ENCODE measurements at regions of chr1 and their contacts with region 1.

Region 1: DNA sequence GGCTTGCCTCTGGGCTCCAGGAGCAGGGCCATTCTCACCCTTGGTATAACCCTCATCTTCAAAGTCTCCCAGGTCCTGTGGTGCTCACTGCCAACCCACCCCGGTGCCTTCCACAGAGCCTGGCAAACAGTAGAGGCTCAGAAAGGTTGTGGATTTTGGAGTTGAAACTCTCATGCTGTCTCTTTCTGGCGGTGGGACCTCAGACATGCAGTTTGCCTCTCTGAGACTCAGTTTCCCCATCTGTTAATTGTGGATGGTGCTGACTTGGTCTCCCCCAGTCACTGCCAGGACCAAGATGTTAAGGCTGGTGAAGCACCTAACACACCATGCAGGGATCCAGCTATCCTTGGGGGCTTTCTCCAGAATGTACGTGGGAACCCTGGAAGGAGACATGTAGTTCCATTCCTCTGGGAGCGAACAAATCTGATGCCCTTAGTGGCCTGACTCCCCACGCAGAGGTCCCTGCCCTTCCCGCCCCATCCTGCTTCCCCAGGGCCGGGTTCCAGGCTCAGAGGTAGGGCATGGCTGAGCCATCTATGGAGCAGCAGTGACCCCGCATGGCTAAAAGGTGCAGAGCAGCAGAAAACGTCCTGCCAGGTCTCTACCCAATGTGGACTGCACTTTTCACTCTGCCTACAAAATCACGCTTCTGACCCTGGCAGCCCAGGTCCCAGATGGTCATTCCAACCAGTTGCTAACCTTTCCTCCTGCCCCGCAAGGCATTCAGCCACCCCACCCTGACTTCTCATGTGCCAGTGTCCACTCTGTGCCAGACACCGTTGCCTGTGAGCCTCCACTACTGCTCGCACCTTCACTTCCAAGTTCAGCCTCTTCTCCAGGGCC is 9.2 kb upstream of the TTC22 start:
- DNase-seq: peak in 3 of 4 donors; percentile 51 to 65 (median 55)
- ATAC-seq: peak; percentile 95
- H3K4me3 ChIP-seq: no peak overlapping the region
- H3K27ac ChIP-seq: no peak overlapping the region
- H3K4me1 ChIP-seq: no peaks in the 10 kb centered on the region
- H3K27me3 ChIP-seq: no peaks in the 10 kb centered on the region
- CTCF ChIP-seq: peak; percentile 67 to 74

Region 2: DNA sequence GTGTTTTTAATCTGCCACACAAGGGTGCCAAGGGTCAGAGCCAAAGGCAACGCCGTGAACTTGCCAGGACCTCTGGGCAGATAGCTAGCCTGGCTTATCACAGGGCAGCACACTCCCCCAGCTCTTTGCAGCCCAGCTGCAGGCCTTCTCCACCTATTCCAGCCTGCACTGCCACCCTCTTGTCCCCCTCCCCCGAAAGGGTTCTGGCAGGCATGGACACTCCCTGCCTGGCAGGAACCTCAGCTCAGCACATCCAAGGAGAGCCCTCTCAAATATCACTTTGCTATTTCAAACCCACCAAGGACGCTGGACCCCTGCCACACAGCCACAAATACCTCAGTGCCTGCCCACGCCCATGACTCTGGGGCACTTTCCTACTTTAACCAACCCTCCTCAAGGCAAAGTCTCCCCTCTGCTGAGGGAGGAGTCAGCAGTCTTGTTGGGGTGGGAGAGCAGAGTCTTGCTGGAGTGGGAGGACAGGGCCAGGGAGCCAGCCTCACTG is 413.2 kb before region 1 on chr1:
- intact Hi-C with region 1: no loop called
- DNase-seq: no peak
- ATAC-seq: peak; percentile 59
- H3K4me3 ChIP-seq: no peak overlapping the region
- H3K27ac ChIP-seq: no peak overlapping the region
- H3K4me1 ChIP-seq: peaks cover 0 to 9% of the 10 kb centered on the region in 2 donors
- H3K27me3 ChIP-seq: no peaks in the 10 kb centered on the region
- CTCF ChIP-seq: no peak

Region 3: GRCh38 chr1:54671985-54672608 is 138.2 kb before region 1 on chr1:
- intact Hi-C with region 1: loop called in 1 of 2 experiments (anchors 10 kb)
- DNase-seq: peak in 1 of 4 donors; percentile 10
- ATAC-seq: peak; percentile 92
- H3K4me3 ChIP-seq: no peak overlapping the region
- H3K27ac ChIP-seq: no peak overlapping the region
- H3K4me1 ChIP-seq: no peaks in the 10 kb centered on the region
- H3K27me3 ChIP-seq: no peaks in the 10 kb centered on the region
- CTCF ChIP-seq: peak; percentile 46 to 66

Measured in left lung (tissue), 14 donors.